ENCODE measurements at regions of chr2 and their contacts with region 1.

Region 1: GRCh38 chr2:210617732-210618330 is 61.4 kb downstream of the CPS1 start:
- DNase-seq: peak; percentile 12
- ATAC-seq: peak; percentile 87
- H3K4me3 ChIP-seq: no peak overlapping the region
- H3K27ac ChIP-seq: no peak overlapping the region
- H3K4me1 ChIP-seq: no peaks in the 10 kb centered on the region
- H3K27me3 ChIP-seq: no peaks in the 10 kb centered on the region
- CTCF ChIP-seq: peak; percentile 49 to 76 (median 70); a peak in 5 of 6 replicates
- POLR2A ChIP-seq: no peak
- RAD21 ChIP-seq: peak; percentile 82

Region 2: DNA sequence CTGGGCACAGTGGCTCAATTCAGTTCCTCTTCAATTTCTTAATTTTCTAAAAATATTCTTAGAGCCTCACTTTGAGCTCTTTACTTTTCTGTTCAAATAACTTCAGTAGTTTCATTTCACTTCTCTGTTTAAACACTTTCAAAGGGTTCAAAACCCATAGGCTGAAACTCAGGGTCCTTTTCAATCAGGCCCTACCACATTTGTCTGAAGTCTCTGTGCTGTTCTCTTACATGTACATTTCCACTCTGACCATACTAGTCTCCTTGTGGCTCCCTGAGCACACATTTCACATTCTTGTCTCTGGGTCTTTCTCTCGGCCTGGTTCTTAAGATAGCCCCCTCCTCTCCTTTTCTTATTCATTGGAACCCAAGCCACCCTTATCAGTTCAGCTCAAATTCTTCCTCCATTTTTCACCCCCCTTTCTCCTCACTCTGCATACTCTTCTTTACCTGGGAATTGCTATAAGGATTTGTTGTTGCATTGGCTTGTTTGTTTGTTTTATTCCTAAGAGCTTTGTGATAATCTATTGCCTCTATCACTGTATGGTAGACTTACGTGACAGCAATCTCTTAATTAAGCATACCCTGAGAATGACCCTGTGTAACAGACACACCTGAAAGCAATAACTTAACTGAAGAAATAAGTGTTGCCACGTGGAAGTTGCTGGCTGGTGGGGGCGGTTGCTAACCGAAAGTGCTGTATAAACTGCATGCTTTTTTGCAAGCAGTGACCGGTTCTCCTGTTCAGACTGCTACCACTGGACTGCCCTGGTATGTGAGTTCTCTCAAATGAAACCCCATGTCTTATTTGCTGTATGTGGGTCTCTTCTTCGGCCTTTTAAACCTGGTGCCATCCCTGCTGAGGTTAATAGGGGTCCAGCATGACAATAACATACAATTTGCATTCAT is 364.9 kb before region 1 on chr2:
- CTCF ChIA-PET with region 1: no interaction called
- POLR2A ChIA-PET with region 1: no interaction called
- RAD21 ChIA-PET with region 1: no interaction called
- intact Hi-C with region 1: loop called (anchors 5 kb)
- DNase-seq: no peak
- ATAC-seq: no peak
- H3K4me3 ChIP-seq: no peak overlapping the region
- H3K27ac ChIP-seq: no peak overlapping the region
- H3K4me1 ChIP-seq: no peaks in the 10 kb centered on the region
- H3K27me3 ChIP-seq: no peaks in the 10 kb centered on the region
- CTCF ChIP-seq: no peak
- POLR2A ChIP-seq: no peak
- RAD21 ChIP-seq: no peak

Region 3: GRCh38 chr2:210606001-210606400 is 11.8 kb before region 1 on chr2:
- CTCF ChIA-PET with region 1: no interaction called
- POLR2A ChIA-PET with region 1: no interaction called
- RAD21 ChIA-PET with region 1: no interaction called
- intact Hi-C with region 1: no loop called
- DNase-seq: no peak
- ATAC-seq: no peak
- H3K4me3 ChIP-seq: no peak overlapping the region
- H3K27ac ChIP-seq: no peak overlapping the region
- H3K4me1 ChIP-seq: no peaks in the 10 kb centered on the region
- H3K27me3 ChIP-seq: no peaks in the 10 kb centered on the region
- CTCF ChIP-seq: no peak
- POLR2A ChIP-seq: no peak
- RAD21 ChIP-seq: no peak

Region 4: GRCh38 chr2:210687786-210688470 is 70.1 kb after region 1 on chr2:
- CTCF ChIA-PET with region 1: no interaction called
- POLR2A ChIA-PET with region 1: no interaction called
- RAD21 ChIA-PET with region 1: no interaction called
- intact Hi-C with region 1: no loop called
- DNase-seq: no peak
- ATAC-seq: no peak
- H3K4me3 ChIP-seq: no peak overlapping the region
- H3K27ac ChIP-seq: no peak overlapping the region
- H3K4me1 ChIP-seq: no peaks in the 10 kb centered on the region
- H3K27me3 ChIP-seq: no peaks in the 10 kb centered on the region
- CTCF ChIP-seq: no peak
- POLR2A ChIP-seq: no peak
- RAD21 ChIP-seq: no peak

Region 5: DNA sequence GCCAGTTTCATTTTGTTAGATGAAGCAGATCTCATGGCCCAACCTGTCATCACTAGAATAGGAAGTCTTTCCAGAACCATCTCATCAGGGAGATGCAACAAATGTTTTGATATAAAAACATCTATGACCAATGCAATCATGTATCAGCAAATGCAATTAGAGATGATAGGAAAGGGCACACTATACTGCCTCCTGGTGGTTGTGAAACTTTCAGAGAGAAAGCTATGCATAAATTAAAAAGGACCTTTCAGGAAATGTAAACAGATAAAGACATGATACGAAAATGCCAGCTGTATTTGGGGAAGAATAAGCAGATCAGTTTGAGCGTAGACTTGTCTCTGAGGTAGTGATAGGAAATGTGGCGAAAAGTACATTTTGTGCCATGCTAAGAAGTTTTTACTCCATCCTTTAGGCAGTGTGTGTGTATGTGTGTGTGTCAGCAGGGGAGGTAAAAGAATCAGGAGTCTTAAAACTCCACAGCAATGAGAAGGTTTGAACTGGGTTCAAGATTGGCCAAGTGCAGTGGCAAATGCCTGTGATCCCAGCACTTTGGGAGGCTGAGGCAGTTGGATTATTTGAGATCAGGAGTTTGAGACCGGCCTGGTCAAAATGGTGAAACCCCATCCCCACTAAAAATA is 417.8 kb after region 1 on chr2:
- CTCF ChIA-PET with region 1: interaction called, 7 read pairs
- POLR2A ChIA-PET with region 1: no interaction called
- RAD21 ChIA-PET with region 1: no interaction called
- intact Hi-C with region 1: loop called (anchors 1 kb)
- DNase-seq: peak; percentile 22
- ATAC-seq: peak; percentile 62; the same call in 1 of the 2 replicates
- H3K4me3 ChIP-seq: no peak overlapping the region
- H3K27ac ChIP-seq: no peak overlapping the region
- H3K4me1 ChIP-seq: no peaks in the 10 kb centered on the region
- H3K27me3 ChIP-seq: no peaks in the 10 kb centered on the region
- CTCF ChIP-seq: peak; percentile 63 to 88 (median 67)
- POLR2A ChIP-seq: no peak
- RAD21 ChIP-seq: peak; percentile 63

Region 6: DNA sequence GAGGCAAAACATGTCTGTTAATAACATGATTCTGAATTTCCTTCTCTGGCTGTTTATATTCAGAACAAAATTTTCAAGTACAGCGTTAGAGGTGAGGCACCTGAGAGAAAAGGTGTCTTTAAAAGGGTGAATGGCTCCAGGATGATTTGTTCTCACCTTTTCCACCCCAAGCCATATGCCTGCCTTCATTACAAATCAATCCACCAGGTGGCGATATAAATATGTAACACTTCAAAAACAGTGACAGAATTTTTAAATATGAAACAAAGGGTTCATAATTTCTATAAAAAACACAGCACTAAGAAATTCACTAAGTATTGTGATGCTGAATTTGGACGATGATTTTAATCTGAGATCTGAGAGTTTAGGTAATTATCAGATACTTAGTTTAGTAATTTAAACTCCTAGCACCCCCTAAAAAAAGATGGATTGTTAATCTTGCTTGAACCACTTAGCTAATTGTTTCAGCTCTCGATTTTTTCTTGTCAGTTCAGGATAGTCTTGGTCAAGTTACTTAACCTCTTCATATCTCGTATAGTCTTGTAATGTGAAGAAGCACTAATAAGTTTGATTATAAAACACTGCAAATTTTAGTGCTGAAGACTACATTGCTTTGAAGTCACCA is 467.3 kb after region 1 on chr2:
- CTCF ChIA-PET with region 1: no interaction called
- POLR2A ChIA-PET with region 1: no interaction called
- RAD21 ChIA-PET with region 1: no interaction called
- intact Hi-C with region 1: loop called (anchors 2 kb)
- DNase-seq: peak; percentile 44
- ATAC-seq: peak; percentile 78
- H3K4me3 ChIP-seq: no peak overlapping the region
- H3K27ac ChIP-seq: no peak overlapping the region
- H3K4me1 ChIP-seq: no peaks in the 10 kb centered on the region
- H3K27me3 ChIP-seq: no peaks in the 10 kb centered on the region
- CTCF ChIP-seq: peak; percentile 45 to 77 (median 55); a peak in 5 of 6 replicates
- POLR2A ChIP-seq: no peak
- RAD21 ChIP-seq: peak; percentile 60

Region 7: GRCh38 chr2:211093743-211094303 is 476.0 kb after region 1 on chr2:
- CTCF ChIA-PET with region 1: no interaction called
- POLR2A ChIA-PET with region 1: no interaction called
- RAD21 ChIA-PET with region 1: no interaction called
- intact Hi-C with region 1: loop called (anchors 2 kb)
- DNase-seq: peak; percentile 39
- ATAC-seq: peak; percentile 73; the same call in 1 of the 2 replicates
- H3K4me3 ChIP-seq: no peak overlapping the region
- H3K27ac ChIP-seq: no peak overlapping the region
- H3K4me1 ChIP-seq: no peaks in the 10 kb centered on the region
- H3K27me3 ChIP-seq: no peaks in the 10 kb centered on the region
- CTCF ChIP-seq: peak; percentile 30 to 65 (median 54); a peak in 5 of 6 replicates
- POLR2A ChIP-seq: no peak
- RAD21 ChIP-seq: peak; percentile 46

Region 8: GRCh38 chr2:211157856-211158463 is 540.1 kb after region 1 on chr2:
- CTCF ChIA-PET with region 1: no interaction called
- POLR2A ChIA-PET with region 1: no interaction called
- RAD21 ChIA-PET with region 1: no interaction called
- intact Hi-C with region 1: loop called (anchors 2 kb)
- DNase-seq: peak; percentile 57
- ATAC-seq: peak; percentile 94
- H3K4me3 ChIP-seq: no peak overlapping the region
- H3K27ac ChIP-seq: no peak overlapping the region
- H3K4me1 ChIP-seq: no peaks in the 10 kb centered on the region
- H3K27me3 ChIP-seq: no peaks in the 10 kb centered on the region
- CTCF ChIP-seq: peak; percentile 66 to 85 (median 80)
- POLR2A ChIP-seq: no peak
- RAD21 ChIP-seq: peak; percentile 61

Region 9: GRCh38 chr2:211174631-211175030 is 556.8 kb after region 1 on chr2:
- CTCF ChIA-PET with region 1: no interaction called
- POLR2A ChIA-PET with region 1: no interaction called
- RAD21 ChIA-PET with region 1: no interaction called
- intact Hi-C with region 1: no loop called
- DNase-seq: no peak
- ATAC-seq: no peak
- H3K4me3 ChIP-seq: no peak overlapping the region
- H3K27ac ChIP-seq: no peak overlapping the region
- H3K4me1 ChIP-seq: no peaks in the 10 kb centered on the region
- H3K27me3 ChIP-seq: no peaks in the 10 kb centered on the region
- CTCF ChIP-seq: no peak
- POLR2A ChIP-seq: no peak
- RAD21 ChIP-seq: no peak

Measured in HCT116 (cell line).